ENCODE measurements at regions of chr20 and their contacts with region 1.

Region 1: DNA sequence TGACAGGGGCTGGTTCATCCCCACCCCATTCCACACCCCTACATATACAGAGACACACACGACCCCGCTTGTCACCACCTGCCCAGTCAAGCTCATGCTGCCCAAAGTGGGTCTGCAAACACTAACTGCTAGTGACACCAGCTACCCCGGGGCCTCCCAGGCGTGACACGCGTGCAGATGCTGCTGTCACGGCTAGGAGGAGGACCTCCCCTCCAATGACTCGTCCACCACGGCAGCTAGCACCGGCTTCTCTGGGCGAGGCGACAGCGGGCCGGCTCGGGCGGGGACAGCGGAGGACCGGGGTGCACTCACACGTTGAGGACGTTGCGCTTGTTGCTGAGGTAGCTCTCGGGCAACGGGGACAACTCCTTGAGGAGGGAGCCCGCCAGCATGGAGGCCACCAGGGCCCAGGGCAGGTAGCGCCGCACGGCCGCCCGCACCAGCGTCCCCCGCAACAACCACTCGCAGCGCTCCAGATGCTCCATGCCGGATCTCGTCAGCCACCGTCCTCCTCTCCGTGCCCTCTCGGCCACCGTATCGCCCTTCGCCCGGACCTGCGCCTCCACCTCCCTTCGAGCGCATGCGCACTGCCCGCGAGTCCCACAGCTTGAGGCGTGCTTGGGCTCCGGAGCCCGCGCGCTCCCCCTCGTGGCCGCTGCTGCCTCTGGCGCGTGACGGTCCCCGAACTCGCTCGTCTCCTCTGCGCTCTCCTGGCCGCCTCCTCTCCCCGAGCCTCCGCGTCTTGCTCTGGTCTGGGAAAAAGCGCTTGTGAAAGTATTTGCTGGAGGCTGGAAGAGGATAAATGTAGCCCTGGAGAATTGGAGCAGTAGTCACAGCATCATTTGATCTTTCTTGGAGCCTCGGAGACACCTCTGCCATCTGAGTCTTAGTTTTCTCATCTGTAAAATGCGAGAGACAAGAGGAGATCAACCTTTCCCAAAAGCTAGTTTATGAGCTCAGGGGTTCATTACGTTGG is at the start of gene FITM2:
- DNase-seq: peak; percentile 99
- ATAC-seq: peak; percentile 98 to 99 (median 98)
- H3K4me3 ChIP-seq: peak within 1 kb of the TSS; percentile 98
- H3K27ac ChIP-seq: peak within 1 kb of the TSS; percentile 36 to 62 (median 55)
- H3K4me1 ChIP-seq: peaks cover 0 to 9% (median 0%) of the 10 kb centered on the region in 4 donors
- H3K27me3 ChIP-seq: no peaks in the 10 kb centered on the region
- CTCF ChIP-seq: peak; percentile 96 to 97 (median 97)
- POLR2A ChIP-seq: peak; percentile 43
- total RNA-seq, gene FITM2: 3.6 to 8.0 (median 6.4) TPM

Region 2: GRCh38 chr20:44217342-44218092 is 93.4 kb before region 1 on chr20:
- intact Hi-C with region 1: loop called (anchors 5 to 10 kb)
- DNase-seq: peak; percentile 73 to 82 (median 74)
- ATAC-seq: peak; percentile 92 to 94 (median 92)
- H3K4me3 ChIP-seq: no peak overlapping the region
- H3K27ac ChIP-seq: no peak overlapping the region
- H3K4me1 ChIP-seq: peaks cover 0 to 10% (median 4%) of the 10 kb centered on the region in 4 donors
- H3K27me3 ChIP-seq: no peaks in the 10 kb centered on the region
- CTCF ChIP-seq: peak; percentile 90 to 95 (median 94)
- POLR2A ChIP-seq: no peak

Region 3: DNA sequence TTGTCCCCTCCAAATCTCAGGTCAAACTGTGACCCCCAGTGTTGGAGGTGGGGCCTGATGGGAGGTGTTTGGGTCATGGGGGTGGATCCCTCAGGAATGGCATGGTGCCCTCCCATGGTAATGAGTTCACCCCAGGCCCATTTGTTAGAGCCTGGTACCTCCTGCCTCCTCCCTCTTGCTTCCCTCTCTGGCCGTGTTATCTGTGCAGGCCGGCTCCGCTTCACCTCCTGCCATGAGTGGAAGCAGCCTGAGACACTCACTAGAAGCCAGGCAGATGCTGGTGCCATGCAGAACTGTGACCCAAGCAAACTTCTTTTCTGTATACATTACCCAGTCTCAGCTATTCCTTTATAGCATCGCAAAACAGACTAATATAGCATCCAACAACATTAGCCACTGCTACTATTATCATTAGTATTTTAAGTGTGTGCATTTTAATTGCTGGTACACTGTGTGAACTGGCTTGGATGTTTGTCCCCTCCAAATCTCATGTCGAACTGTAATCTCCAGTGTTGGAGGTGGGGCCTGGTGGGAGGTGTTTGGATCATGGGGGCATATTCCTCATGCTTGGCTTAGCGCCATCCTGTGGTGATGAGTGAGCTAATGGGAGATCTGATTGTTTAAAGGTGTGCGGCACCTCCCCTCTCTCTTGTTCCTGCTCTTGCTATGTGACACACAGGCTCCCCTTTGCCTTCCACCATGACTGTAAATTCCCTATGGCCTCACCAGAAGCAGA is 88.2 kb before region 1 on chr20:
- intact Hi-C with region 1: loop called (anchors 5 to 10 kb)
- DNase-seq: no peak
- ATAC-seq: no peak
- H3K4me3 ChIP-seq: no peak overlapping the region
- H3K27ac ChIP-seq: no peak overlapping the region
- H3K4me1 ChIP-seq: peaks cover 0 to 4% (median 2%) of the 10 kb centered on the region in 4 donors
- H3K27me3 ChIP-seq: no peaks in the 10 kb centered on the region
- CTCF ChIP-seq: no peak
- POLR2A ChIP-seq: no peak